K562 (cell line): ENCODE measurements at regions of chr7 and their contacts with region 1.

Region 1: DNA sequence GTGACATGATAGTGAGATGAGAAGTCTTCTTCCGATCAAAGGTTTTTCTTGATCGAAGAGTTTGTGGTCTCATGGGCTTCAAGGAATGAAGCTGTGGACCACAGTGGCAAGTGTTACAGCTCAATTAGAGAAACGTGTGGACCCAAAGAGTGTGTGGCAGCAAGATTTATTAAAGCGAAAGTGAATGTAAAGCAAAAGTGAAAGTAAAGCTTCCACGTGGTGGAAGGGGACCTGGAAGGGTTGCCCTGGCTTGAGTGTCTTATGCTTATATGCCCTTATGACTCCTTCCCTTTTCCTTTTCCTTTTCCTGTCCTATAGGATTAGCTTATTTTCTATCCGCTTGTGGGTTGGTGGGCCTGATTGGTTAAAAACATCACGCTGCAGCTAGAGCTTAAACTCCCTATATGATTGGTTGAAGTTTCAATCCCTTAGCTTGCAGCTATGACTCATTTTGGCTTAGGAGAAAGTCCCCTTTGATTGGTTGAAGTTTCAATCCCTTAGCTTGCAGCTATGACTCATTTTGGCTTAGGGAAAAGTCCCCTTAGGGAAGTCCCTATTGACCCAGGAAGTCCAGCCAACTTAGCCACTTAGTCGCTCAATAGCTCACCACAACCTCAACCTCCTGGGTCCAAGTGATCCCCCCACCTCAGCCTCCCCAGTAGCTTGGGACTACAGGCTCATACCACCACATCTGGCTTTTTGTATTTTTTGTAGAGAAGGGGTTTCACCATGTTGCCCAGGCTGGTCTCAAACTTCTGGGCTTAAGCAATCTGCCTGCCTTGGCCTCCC is 34.7 kb downstream of the MRPS24 start:
- DNase-seq: peak in 1 of 4 experiments; percentile 24
- ATAC-seq: peak; percentile 33; the same call in 1 of the 3 replicates
- H3K4me3 ChIP-seq: no peak overlapping the region
- H3K27ac ChIP-seq: peak overlapping the region; percentile 18; the same call in 1 of the 3 replicates
- H3K4me1 ChIP-seq: peaks cover 4 to 7% of the 10 kb centered on the region in 2 experiments; a peak in 3 of 5 replicates
- H3K27me3 ChIP-seq: no peaks in the 10 kb centered on the region
- CTCF ChIP-seq: no peak
- EP300 ChIP-seq: no peak
- POLR2A ChIP-seq: no peak
- RAD21 ChIP-seq: no peak

Region 2: DNA sequence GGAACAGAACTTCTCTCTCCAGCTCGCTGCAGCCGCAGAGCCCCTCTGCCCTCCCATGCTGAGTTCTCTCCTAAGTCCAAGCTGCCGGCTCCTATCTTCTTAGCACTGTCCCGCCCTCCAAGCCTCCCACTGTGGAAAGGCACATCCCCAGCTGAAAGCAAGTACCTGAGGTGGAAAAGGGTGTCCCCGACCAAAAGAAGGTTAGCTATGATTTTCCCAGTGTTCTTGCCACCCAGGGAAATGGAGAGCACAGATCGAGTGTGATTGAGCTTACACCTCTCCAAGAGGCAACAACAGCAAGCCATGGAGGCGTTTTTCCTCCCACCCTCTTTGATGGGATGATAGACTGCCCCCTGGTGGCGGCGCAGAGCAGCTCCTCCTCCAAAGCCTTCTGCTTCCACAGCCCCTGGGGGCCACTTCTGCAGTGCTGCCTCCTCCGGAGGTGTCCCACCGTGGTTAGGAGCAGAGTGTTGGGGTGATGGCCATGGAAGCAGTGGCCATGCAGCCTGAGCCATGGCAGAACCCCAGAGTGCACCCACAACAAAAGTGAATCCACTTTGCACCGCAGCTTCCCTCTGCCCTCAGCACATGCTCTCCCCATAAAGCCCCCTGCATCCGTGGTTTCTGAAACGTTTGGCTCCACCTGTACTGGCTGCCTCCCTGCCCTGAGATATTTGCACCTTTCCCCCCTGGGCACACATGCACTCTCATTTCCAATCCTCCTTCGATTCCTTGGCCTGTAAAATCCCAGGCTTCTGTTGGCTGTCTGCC is 394.8 kb before region 1 on chr7:
- CTCF ChIA-PET with region 1: no interaction called
- POLR2A ChIA-PET with region 1: interaction called, 4 read pairs
- in situ Hi-C with region 1: loop called (anchors 10 kb)
- intact Hi-C with region 1: no loop called
- DNase-seq: peak; percentile 70 to 82 (median 80)
- ATAC-seq: peak; percentile 98
- H3K4me3 ChIP-seq: no peak overlapping the region
- H3K27ac ChIP-seq: no peak overlapping the region
- H3K4me1 ChIP-seq: peaks cover 0 to 8% of the 10 kb centered on the region in 2 experiments; a peak in 1 of 5 replicates
- H3K27me3 ChIP-seq: peaks cover 19 to 20% of the 10 kb centered on the region in 2 experiments
- CTCF ChIP-seq: peak; percentile 89 to 94 (median 90)
- EP300 ChIP-seq: no peak
- POLR2A ChIP-seq: no peak
- RAD21 ChIP-seq: peak; percentile 51 to 81

Region 3: DNA sequence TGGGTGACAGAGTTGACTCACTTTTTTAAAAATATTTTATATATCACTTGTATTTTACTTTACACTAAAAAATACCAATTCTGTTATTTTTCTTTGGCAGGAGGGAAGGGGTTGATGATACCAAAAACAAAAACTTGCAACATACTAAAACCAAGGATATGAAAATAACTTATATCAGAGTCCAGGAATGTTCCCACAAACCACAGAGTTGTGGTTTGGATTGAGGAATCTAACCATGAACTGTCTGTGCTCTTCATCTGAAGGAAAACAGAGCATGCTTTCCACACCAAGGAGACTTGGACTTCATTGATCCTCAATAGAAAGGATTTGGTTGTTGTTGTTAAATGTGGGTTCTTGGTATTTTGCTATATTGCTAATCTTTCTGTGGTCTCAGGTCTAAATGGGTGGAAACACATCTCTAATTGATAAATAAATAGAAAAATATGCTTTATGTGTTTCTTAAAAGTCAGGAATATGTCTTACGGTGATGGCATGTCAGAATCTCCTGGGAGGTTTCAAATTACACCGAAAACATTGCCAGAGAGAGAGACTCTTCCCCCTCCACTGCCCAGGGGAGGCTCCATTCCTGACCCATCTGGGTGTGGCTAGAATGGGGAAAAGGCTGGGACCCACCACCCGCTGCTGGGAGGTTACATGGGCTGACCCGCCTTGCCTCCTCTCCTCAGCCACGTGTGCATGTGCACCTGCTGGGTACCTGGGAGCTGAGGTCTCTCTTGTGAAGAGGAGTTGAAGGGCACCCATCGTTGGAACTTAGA is 298.7 kb before region 1 on chr7:
- CTCF ChIA-PET with region 1: no interaction called
- POLR2A ChIA-PET with region 1: no interaction called
- in situ Hi-C with region 1: no loop called
- intact Hi-C with region 1: no loop called
- DNase-seq: no peak
- ATAC-seq: peak; percentile 29; the same call in 2 of the 3 replicates
- H3K4me3 ChIP-seq: no peak overlapping the region
- H3K27ac ChIP-seq: no peak overlapping the region
- H3K4me1 ChIP-seq: peaks cover 0 to 4% of the 10 kb centered on the region in 2 experiments; a peak in 3 of 5 replicates
- H3K27me3 ChIP-seq: peaks cover 41 to 63% of the 10 kb centered on the region in 2 experiments
- CTCF ChIP-seq: no peak
- EP300 ChIP-seq: no peak
- POLR2A ChIP-seq: no peak
- RAD21 ChIP-seq: no peak

Region 4: DNA sequence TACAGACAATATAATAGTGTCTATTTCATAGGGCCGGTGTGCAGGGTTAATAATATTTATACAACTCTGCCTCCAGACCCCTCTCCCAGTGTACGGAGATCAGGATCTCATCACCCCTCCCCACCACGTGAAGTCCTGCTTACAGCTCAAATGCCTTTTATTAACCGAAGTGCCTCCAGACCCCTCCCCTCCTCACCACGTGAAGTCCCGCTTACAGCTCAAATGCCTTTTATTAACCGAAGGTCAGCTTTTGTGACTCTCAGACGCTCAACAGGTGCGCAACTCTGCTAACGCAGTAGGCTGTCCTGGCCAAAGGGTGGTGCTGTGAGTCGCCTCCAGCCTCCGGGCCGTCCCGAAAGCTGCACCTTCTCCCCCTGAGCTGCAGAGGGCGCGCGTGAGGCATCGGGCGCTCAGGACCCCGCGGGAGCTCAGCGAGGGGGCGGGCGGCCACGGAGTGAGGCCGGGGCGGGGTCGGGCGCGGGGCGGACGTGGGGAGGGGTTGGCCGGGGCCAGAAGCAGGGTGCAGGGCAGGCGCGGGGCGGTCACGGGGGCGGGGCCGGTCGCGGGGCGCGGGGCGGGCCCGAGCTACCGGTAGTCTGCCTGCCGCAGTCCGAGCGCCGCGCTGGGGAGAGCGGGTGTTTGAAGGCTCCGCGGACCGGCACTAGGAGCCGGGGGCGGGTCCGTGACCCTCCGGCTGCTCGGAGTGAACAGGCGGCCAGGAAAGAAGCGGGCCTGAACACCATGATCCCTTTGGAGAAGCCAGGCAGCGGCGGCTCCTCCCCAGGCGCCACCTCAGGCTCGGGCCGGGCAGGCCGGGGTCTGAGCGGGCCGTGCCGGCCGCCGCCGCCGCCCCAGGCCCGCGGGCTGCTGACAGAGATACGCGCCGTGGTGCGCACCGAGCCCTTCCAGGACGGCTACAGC is 251.9 kb before region 1 on chr7 and contains the start of gene STK17A:
- CTCF ChIA-PET with region 1: interaction called, 53 read pairs
- POLR2A ChIA-PET with region 1: interaction called, 3 read pairs
- in situ Hi-C with region 1: loop called (anchors 10 kb)
- intact Hi-C with region 1: loop called (anchors 1 kb)
- DNase-seq: peak; percentile 94 to 97 (median 96)
- ATAC-seq: peak; percentile 89
- H3K4me3 ChIP-seq: peak within 1 kb of the TSS; percentile 89
- H3K27ac ChIP-seq: peak within 1 kb of the TSS; percentile 82
- H3K4me1 ChIP-seq: peaks cover 7 to 18% of the 10 kb centered on the region in 2 experiments; a peak in 4 of 5 replicates
- H3K27me3 ChIP-seq: no peaks in the 10 kb centered on the region; a peak in 1 of 5 replicates
- CTCF ChIP-seq: peak; percentile 97 to 100 (median 100)
- EP300 ChIP-seq: no peak
- POLR2A ChIP-seq: peak; percentile 86
- RAD21 ChIP-seq: peak; percentile 91 to 94
- polyA plus RNA-seq, gene STK17A: 3.4 to 3.5 TPM

Region 5: DNA sequence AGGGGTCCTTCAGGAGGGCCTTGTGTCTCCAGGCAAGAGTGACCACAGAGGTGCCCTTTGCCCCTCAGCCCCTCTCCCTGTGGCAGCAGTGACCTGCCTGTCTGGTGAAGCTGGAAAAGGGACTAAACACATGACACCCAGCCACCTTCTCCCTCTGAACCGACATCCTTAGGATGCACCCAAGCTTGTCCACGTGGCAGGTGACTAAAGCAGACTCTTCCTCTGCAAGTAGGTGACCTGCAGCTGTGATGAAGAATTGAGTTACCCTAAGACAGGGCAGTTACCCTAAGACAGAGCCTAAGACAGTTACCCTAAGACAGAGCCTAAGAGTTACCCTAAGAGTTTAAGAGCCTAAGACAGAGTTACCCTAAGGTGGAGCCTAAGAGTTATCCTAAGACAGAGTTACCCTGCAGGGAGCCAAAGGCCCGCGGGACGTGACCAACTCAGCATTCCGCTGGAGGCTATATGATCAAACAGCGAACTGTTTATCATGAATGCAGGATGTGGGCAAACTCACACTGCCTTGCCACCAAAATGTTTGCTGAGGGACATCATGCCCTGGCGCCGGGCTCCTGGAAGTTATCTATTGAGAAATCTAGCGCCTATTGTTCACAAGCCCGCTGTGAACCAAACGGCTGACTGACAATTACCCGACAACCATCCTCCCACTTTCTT is 26.4 kb before region 1 on chr7:
- CTCF ChIA-PET with region 1: interaction called, 3 read pairs
- POLR2A ChIA-PET with region 1: no interaction called
- in situ Hi-C with region 1: no loop called
- intact Hi-C with region 1: loop called (anchors 1 kb)
- DNase-seq: no peak
- ATAC-seq: no peak
- H3K4me3 ChIP-seq: no peak overlapping the region
- H3K27ac ChIP-seq: no peak overlapping the region
- H3K4me1 ChIP-seq: peaks cover 0 to 3% of the 10 kb centered on the region in 2 experiments; a peak in 2 of 5 replicates
- H3K27me3 ChIP-seq: no peaks in the 10 kb centered on the region
- CTCF ChIP-seq: no peak
- EP300 ChIP-seq: no peak
- POLR2A ChIP-seq: no peak
- RAD21 ChIP-seq: no peak